ENCODE measurements at regions of chr19 and their contacts with region 1.

Region 1: GRCh38 chr19:8412783-8413628 is at the start of gene MARCHF2:
- DNase-seq: peak; percentile 95
- H3K4me3 Mint-ChIP-seq: peak within 1 kb of the TSS; percentile 56
- H3K27ac Mint-ChIP-seq: peak within 1 kb of the TSS; percentile 16
- H3K4me1 Mint-ChIP-seq: peaks cover 11% of the 10 kb centered on the region
- H3K27me3 Mint-ChIP-seq: no peaks in the 10 kb centered on the region
- total RNA-seq, gene MARCHF2: 8.1 and 9.6 TPM in 2 replicates

Region 2: GRCh38 chr19:6906559-6907060 is 1506.4 kb before region 1 on chr19:
- intact Hi-C with region 1: no loop called
- DNase-seq: no peak
- H3K4me3 Mint-ChIP-seq: no peak overlapping the region
- H3K27ac Mint-ChIP-seq: no peak overlapping the region
- H3K4me1 Mint-ChIP-seq: no peaks in the 10 kb centered on the region
- H3K27me3 Mint-ChIP-seq: peaks cover 2% of the 10 kb centered on the region

Region 3: GRCh38 chr19:8321060-8321985 is 91.7 kb before region 1 on chr19 and contains the starts of genes NDUFA7 and RPS28:
- intact Hi-C with region 1: loop called (anchors 1 kb)
- DNase-seq: peak; percentile 96
- H3K4me3 Mint-ChIP-seq: peak within 1 kb of the TSS; percentile 100
- H3K27ac Mint-ChIP-seq: peak within 1 kb of the TSS; percentile 99
- H3K4me1 Mint-ChIP-seq: peaks cover 31% of the 10 kb centered on the region
- H3K27me3 Mint-ChIP-seq: no peaks in the 10 kb centered on the region
- total RNA-seq, gene NDUFA7: 51.1 and 51.8 TPM in 2 replicates
- total RNA-seq, gene RPS28: 1,836 and 1,872 TPM in 2 replicates

Region 4: DNA sequence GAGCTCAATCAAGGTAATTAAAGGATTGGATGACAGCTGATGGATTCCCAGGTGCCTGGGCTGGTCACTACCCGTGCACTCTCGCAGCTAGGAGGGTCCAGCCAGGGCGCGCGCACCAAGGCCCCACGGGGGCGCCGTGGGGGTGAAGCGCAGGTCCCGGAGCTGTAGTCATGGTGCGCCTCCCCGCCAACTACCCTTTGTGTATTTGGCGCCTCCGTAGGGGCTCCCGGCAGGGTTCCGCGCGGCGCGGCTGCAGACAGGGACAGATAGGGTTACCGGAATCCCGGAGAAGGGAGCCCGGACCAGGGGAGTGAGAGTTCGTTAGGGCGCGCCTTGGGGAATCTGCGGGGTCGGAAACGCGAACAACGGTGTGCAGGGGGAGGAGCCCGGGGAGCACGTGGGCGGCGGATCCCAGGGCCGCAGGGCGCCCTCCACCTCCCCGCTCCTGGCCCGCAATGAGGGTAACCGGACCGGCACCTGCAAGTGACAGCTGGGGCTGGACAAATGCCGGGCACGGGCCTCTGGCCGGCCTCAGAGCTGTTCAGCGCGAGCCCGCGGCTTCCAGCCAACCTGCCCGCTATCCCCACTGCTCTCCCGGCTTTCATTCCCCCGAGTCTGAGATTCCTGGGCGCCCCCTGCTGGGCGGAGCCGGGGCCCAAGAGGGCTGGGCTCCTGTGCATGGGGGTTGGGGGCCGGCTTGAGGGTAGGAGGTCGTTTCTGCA is 92.8 kb after region 1 on chr19:
- intact Hi-C with region 1: loop called (anchors 1 kb)
- DNase-seq: peak; percentile 46
- H3K4me3 Mint-ChIP-seq: peak overlapping the region; percentile 90
- H3K27ac Mint-ChIP-seq: peak overlapping the region; percentile 31
- H3K4me1 Mint-ChIP-seq: peaks cover 9% of the 10 kb centered on the region
- H3K27me3 Mint-ChIP-seq: no peaks in the 10 kb centered on the region

Region 5: DNA sequence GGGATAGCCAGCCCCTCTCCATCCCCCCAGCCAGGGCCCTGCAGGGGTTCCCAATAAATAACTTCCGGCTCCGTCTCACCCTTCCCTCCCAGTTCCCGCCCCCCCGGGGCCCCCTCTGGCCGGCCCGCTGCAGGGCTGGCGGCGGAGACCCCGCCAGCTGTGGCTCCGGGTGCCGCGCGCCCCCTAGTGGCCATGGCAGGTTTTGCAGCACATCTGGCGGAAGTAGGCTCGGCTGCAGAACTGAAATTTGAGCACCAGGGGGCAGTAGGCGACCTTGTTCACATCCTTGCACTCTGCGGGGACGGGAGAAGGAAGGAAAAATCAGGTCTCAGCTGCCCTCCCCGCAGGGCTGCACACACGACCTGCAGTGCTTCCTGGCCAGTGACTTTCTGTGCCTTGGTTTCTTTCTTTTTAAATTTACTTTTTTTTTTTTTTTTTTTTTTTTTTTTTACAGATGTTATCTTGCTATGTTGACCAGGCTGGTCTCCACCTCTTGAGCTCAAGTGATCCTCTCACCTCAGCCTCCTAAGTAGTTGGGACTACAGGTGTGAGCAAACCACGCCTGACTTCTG is 167.8 kb after region 1 on chr19:
- intact Hi-C with region 1: loop called (anchors 2 kb)
- DNase-seq: peak; percentile 80
- H3K4me3 Mint-ChIP-seq: no peak overlapping the region
- H3K27ac Mint-ChIP-seq: no peak overlapping the region
- H3K4me1 Mint-ChIP-seq: peaks cover 26% of the 10 kb centered on the region
- H3K27me3 Mint-ChIP-seq: peaks cover 3% of the 10 kb centered on the region

Region 6: DNA sequence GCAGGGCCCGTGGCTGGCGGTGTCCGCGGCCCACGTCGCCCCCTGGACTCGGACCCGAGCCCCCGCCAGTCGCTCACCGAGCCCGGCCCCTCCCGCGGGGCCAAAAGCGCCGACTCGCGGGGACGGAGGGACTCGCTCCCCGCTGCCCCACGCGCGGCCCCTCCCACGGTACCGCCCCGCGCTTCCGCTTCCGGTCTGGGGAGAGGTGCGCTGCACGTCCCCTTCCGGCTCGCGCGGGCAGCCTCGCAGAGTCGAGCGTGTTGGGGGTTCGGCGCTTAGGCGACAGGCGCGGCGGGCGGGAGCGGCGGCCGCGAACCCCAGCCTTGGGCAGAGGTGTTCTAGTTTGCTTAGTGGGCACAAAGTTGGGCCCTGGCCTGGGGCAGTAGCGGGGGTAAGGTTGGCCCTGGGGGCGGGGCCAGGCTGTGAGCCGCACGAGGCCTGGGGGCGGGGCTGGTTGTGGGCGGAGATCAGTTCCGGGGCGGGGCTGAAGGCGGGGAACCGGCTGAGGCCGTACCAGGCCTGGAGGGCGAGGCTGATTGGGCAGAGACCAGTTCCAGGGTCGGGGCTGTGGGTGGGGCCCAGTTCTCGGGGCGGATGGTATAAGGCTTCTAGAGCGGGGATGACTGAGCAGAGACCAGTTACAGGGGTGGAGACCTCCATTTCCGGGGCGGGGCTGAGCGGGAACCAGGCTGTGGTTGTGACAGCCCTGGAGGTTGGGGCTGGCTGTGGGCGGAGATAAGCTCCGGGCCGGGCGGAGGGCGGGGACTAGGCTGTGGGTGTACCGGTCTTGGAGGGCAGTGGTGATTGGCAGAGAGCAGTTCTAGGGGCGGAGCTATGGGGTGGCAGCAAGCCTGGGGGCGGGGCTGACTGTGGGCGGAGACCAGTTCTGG is 419.4 kb after region 1 on chr19 and contains the starts of genes MBD3L1 and ZNF558:
- intact Hi-C with region 1: loop called (anchors 1 kb)
- DNase-seq: peak; percentile 98
- H3K4me3 Mint-ChIP-seq: peak within 1 kb of the TSS; percentile 84
- H3K27ac Mint-ChIP-seq: peak within 1 kb of the TSS; percentile 95
- H3K4me1 Mint-ChIP-seq: peaks cover 20% of the 10 kb centered on the region
- H3K27me3 Mint-ChIP-seq: no peaks in the 10 kb centered on the region
- total RNA-seq, gene MBD3L1: not detected in 2 replicates
- total RNA-seq, gene ZNF558: 18.7 and 23.2 TPM in 2 replicates

Measured in activated T-helper 1 cell treated with anti-CD3 and anti-CD28 coated beads, Interleukin-12 subunit alpha, Interleukin-12 subunit beta, Interleukin-2, Interleukin-4 antibody, amounts not matched to agents 30 ng/mL and 10 ng/mL and 1 ng/mL, durations not matched to agents 14 hours and 24 hours and 36 hours (primary cell).